HEK293T (cell line): ENCODE measurements at regions of chr2 and their contacts with region 1.

Region 1: DNA sequence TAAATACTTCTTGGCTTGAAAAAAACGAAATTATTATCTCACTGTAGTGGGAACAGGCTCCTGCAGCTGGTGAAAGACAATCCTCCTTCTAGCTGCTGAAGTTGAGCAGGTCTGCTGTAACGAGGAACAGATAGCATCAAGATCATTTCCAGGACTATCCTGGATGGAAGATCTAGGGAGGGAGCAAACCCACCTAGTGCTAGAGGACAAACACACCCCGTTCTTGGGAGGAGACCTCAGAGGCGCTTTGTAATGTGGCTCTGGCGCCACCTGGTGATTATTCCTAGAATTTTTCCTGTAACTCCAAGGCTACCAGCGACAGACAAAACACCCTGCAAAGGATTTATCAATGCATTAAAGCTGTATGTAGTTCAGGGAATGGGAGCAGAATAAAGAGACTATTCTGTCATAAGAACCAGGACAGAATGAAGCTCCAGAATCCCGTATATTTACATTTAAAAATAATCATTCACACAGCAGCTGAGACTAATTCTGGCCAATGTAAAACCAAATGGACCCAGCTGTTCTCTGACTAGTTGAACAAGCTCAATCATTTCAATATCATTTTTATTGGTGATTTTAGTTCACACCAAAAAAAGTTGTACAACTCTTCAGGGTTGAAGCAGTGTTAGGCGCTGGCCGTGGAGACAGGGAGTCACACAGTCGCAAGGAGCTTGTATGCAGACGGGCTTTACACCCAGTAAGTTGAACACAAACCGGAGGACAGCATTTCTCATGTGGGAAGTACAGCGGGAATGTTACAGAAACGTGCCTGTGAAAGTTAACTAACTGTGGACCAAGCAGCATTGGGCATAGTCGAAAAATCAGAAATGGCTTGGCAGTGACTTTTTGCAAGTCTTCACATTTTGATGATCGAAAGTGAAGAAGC is 290.3 kb downstream of the TRIB2 start:
- DNase-seq: peak; percentile 64

Region 2: DNA sequence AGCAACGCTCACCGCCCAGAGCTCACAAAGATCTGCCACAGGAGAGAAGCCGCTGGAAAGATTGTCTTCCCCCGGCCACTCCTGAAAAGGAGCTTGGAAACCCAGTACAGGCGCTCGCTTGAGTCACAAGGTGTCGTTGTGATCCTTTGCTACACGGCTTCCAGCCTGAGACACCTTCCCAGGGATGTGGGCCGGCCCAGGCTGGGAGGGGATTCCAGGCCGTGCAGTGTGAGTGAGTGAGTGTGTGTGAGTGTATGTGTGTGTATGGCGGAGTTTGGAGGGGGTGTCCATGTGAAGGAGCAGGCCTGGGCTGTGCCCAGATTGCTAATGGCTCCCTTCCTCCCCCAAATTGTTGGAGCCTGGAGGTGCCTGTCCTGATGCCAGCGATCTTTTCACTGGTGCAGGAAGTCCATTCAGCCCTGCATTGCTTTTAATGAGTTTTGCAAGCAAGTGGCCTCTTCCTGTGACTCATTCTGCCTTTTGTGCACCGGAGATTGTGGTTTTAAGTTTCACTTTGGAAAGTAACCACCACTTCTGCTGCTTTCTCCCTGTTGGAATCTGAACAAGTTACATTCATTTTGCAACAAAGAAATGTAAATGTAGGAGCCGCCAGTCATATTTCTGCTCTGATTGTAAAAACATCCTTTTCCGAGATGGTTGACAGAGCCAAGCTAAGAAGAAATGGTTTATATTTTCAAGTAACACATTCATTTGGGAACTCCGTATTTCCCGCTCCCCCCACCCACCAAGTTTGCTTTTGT is 1176.9 kb before region 1 on chr2:
- CTCF ChIA-PET with region 1: interaction called, 23 read pairs
- POLR2A ChIA-PET with region 1: interaction called, 3 read pairs
- DNase-seq: peak; percentile 55

Region 3: GRCh38 chr2:12970861-12971260 is 36.2 kb before region 1 on chr2:
- CTCF ChIA-PET with region 1: no interaction called
- POLR2A ChIA-PET with region 1: no interaction called
- DNase-seq: no peak

Region 4: GRCh38 chr2:13040043-13040442 is 33.0 kb after region 1 on chr2:
- CTCF ChIA-PET with region 1: no interaction called
- POLR2A ChIA-PET with region 1: no interaction called
- DNase-seq: no peak

Region 5: GRCh38 chr2:13218205-13218604 is 211.1 kb after region 1 on chr2:
- CTCF ChIA-PET with region 1: no interaction called
- POLR2A ChIA-PET with region 1: no interaction called
- DNase-seq: no peak